PC-9 (cell line): ENCODE measurements at regions of chr3 and their contacts with region 1.

Region 1: DNA sequence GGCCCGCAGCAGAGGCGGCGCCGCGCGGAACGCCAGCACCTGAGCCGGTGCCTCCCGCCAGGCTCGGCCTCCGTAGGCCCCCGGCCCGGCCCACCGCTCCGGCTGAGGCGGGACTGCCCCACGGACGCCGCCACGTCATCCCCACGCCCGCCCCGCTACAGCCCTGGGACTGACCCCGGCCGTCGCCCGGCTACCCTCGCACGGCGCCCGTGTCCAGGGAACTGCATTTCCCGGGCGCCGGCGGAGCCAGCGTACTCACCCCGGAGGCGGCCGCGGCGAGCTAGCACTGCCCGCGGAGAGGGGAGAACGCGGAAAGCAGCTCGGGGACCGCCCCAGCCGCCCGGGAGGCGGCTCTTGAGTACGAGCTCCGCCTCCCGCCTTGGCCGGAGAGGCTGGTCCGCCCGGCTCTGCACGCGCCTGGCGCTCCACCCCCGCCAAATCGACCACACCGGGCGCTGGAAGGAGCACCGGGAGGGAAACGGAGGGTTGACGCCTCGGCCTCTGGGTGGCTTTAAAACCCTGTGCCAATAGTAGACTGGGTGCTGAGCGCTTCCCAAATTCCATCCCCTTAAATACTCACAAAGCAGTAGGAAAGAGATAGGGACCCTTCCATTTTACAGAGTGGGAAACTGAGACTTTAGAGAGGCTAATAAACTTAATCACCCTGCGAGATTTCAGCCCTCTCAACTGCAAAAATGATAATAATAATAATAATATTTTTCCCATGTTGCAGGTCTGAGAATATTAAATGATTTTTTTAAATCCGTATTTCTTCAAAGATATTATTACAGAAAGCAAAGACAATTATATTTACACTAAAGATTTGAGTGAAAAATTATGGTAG is at the start of gene B4GALT4:
- DNase-seq: peak; percentile 76 to 91
- H3K4me3 ChIP-seq: peak within 1 kb of the TSS; percentile 85
- H3K27ac ChIP-seq: peak within 1 kb of the TSS; percentile 68
- H3K4me1 ChIP-seq: peaks cover 14% of the 10 kb centered on the region
- H3K27me3 ChIP-seq: no peaks in the 10 kb centered on the region
- CTCF ChIP-seq: no peak
- total RNA-seq, gene B4GALT4: 21.8 and 32.9 TPM in 2 replicates

Region 2: GRCh38 chr3:117885011-117885441 is 1355.8 kb before region 1 on chr3:
- CTCF ChIA-PET with region 1: interaction called, 10 read pairs
- POLR2A ChIA-PET with region 1: no interaction called
- intact Hi-C with region 1: no loop called
- DNase-seq: no peak
- H3K4me3 ChIP-seq: no peak overlapping the region
- H3K27ac ChIP-seq: no peak overlapping the region
- H3K4me1 ChIP-seq: no peaks in the 10 kb centered on the region
- H3K27me3 ChIP-seq: no peaks in the 10 kb centered on the region
- CTCF ChIP-seq: no peak

Region 3: GRCh38 chr3:119034256-119035013 is 206.4 kb before region 1 on chr3 and contains the start of gene IGSF11:
- CTCF ChIA-PET with region 1: no interaction called
- POLR2A ChIA-PET with region 1: no interaction called
- intact Hi-C with region 1: loop called (anchors 2 kb)
- DNase-seq: peak in 1 of 2 experiments; percentile 66
- H3K4me3 ChIP-seq: peak within 1 kb of the TSS; percentile 70
- H3K27ac ChIP-seq: no peak within 1 kb of the TSS
- H3K4me1 ChIP-seq: 0 out of 2 replicates have a peak, but pooled peaks cover 4% of the 10 kb centered on the region
- H3K27me3 ChIP-seq: peaks cover 35% of the 10 kb centered on the region
- CTCF ChIP-seq: no peak; the same call in 1 of the 2 replicates
- total RNA-seq, gene IGSF11: not detected in 2 replicates

Region 4: DNA sequence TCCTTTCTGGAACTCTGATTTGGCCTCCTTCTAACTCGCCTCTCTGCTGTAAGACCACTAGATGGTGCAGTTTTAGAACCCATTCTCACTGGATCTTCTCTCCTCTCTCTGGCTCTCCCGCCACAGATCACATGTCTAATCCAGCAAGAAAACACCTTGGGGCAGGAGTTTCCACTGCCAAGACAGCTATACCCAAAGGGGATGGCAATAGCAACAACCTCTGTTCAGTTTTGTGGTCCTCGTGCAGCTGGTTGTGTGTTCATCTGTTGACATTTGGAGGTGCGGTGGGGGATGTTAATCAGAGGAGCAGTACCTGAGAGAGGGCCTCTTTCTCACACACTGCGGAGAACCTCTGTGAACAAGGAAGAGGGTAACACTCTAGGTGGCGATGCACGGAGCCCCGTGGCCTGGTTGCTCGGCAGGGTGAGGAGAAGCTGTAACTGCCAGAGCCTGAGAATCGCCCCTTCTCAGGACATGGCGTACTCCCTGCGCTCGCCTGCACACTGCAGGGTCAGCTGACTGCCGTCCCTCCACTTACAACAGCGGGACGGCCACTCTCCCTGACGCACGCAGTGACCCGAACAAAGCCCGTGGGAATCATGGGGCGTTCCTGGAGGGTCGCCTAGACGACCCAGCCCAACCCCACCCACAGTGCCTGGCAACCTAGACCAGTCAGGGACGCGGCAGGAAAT is 95.2 kb before region 1 on chr3 and contains the start of gene TEX55:
- CTCF ChIA-PET with region 1: interaction called, 6 read pairs
- POLR2A ChIA-PET with region 1: no interaction called
- intact Hi-C with region 1: loop called (anchors 1 kb)
- DNase-seq: peak in 1 of 2 experiments; percentile 35
- H3K4me3 ChIP-seq: no peak within 1 kb of the TSS
- H3K27ac ChIP-seq: no peak within 1 kb of the TSS
- H3K4me1 ChIP-seq: peaks cover 18% of the 10 kb centered on the region; the same call in 1 of the 2 replicates
- H3K27me3 ChIP-seq: no peaks in the 10 kb centered on the region
- CTCF ChIP-seq: peak; percentile 64
- total RNA-seq, gene TEX55: not detected in 2 replicates

Region 5: DNA sequence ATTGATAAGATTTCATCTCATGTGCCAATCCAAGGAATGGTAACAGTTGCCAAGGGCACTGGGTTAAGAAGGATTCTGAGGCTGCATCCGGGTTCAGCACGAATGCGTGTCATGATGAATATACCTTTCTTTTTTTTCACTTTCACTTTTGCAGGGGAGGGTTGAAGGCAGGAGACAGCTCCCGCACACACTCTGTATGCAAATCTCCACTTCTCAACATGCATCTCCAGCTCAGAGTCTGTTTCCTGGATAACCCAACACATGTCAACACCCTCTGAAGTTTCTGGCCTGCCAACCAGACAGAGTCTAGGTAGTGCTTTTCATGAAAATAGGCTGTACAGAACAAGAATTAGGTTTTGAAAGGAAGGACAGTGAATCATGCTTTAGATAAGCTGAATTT is 21.7 kb before region 1 on chr3:
- CTCF ChIA-PET with region 1: no interaction called
- POLR2A ChIA-PET with region 1: no interaction called
- intact Hi-C with region 1: no loop called
- DNase-seq: no peak
- H3K4me3 ChIP-seq: no peak overlapping the region
- H3K27ac ChIP-seq: no peak overlapping the region
- H3K4me1 ChIP-seq: no peaks in the 10 kb centered on the region
- H3K27me3 ChIP-seq: no peaks in the 10 kb centered on the region
- CTCF ChIP-seq: no peak

Region 6: GRCh38 chr3:119257682-119258410 is 17.0 kb after region 1 on chr3:
- CTCF ChIA-PET with region 1: interaction called, 9 read pairs
- POLR2A ChIA-PET with region 1: interaction called, 10 read pairs
- intact Hi-C with region 1: no loop called
- DNase-seq: peak; percentile 37 to 53
- H3K4me3 ChIP-seq: no peak overlapping the region
- H3K27ac ChIP-seq: peak overlapping the region; percentile 34; the same call in 1 of the 2 replicates
- H3K4me1 ChIP-seq: peaks cover 19% of the 10 kb centered on the region
- H3K27me3 ChIP-seq: no peaks in the 10 kb centered on the region
- CTCF ChIP-seq: no peak

Region 7: DNA sequence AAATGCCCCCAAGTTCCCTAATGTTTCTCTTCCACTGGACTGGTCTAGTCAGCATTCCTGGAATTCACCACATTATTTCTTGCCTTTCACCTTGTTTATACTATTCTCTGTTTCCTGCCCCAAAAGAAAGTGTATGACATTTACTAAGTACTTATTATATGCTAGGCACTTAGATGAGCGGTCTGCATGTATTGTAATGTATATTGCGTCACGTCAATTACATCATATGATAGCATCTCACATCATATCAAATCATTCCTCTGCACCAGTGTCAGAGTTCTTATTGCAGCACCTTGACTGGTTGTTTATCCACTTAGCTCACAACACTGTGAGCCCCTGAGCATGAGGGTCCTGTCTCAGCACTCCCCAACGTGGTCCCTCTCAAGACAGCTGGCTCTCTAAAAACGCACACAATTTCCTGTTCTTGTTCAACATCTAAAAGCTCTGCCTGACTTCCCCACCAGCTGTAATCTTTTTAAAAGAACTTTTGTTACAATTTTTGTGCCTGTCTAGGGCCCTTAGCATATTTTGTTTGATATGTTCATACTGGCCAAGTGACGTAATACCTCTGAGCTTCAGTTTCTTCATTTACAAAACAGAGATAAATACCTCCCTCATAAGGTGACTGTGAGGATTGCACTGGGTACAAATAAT is 112.2 kb after region 1 on chr3:
- CTCF ChIA-PET with region 1: interaction called, 11 read pairs
- POLR2A ChIA-PET with region 1: no interaction called
- intact Hi-C with region 1: no loop called
- DNase-seq: peak in 1 of 2 experiments; percentile 66
- H3K4me3 ChIP-seq: peak overlapping the region; percentile 24; the same call in 1 of the 2 replicates
- H3K27ac ChIP-seq: peak overlapping the region; percentile 78
- H3K4me1 ChIP-seq: peaks cover 21% of the 10 kb centered on the region
- H3K27me3 ChIP-seq: no peaks in the 10 kb centered on the region
- CTCF ChIP-seq: peak; percentile 53

Region 8: DNA sequence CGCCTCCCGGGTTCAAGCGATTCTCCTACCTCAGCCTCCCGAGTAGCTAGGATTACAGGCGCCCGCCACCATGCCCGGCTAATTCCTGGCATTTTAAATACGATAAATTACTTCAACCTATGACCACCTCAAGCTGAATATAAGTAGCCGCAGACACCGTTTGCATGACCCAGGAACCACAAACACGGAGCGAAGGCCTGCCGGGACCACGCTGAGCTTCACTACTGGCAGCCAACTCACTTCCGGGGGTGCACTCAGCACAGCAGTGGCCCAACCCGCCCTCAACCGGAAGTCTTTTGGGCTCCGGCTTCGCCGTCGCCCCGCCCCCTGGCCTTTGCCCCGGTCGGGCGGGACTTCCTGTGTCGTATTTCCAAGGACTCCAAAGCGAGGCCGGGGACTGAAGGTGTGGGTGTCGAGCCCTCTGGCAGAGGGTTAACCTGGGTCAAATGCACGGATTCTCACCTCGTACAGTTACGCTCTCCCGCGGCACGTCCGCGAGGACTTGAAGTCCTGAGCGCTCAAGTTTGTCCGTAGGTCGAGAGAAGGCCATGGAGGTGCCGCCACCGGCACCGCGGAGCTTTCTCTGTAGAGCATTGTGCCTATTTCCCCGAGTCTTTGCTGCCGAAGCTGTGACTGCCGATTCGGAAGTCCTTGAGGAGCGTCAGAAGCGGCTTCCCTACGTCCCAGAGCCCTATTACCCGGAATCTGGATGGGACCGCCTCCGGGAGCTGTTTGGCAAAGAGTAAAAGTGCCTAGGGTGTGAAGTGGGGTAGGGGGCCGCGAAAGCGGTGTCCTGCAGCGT is 257.6 kb after region 1 on chr3 and contains the start of gene TIMMDC1:
- CTCF ChIA-PET with region 1: no interaction called
- POLR2A ChIA-PET with region 1: no interaction called
- intact Hi-C with region 1: loop called (anchors 5 kb)
- DNase-seq: peak; percentile 94 to 97
- H3K4me3 ChIP-seq: peak within 1 kb of the TSS; percentile 98
- H3K27ac ChIP-seq: peak within 1 kb of the TSS; percentile 85
- H3K4me1 ChIP-seq: peaks cover 24% of the 10 kb centered on the region; the same call in 1 of the 2 replicates
- H3K27me3 ChIP-seq: no peaks in the 10 kb centered on the region
- CTCF ChIP-seq: no peak
- total RNA-seq, gene TIMMDC1: 145 and 203 TPM in 2 replicates